Activated naive CD4-positive, alpha-beta T cell treated with anti-CD3 and anti-CD28 coated beads for 36 hours (primary cell): ENCODE measurements at regions of chr21 and their contacts with region 1.

Region 1: DNA sequence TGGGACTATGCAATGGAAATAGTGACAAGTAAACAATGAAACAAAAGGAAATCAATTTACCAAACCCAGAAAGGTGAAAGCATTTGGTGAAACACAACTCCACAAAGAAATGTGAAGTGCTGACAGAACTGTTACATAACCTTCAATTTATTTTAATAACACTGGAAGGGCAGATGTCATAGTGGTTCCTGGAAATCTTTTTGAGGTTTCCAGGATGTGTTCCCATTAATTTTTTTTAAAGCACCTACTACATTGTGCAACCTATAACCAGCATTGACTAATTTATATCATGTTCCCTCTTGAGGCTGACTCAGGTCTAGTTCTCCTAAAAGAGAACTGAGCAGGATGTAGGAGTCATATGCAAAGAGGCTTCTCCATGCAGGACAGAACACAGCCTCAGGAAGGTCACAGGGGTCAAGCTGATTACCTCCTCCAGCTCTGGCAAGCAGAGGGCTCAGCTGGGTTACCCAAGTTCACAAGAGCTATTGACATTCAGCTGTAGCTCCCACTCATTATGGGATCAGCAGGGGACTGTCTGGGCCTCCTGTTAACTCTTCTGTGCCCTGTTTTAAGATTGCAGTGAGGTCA is 157.1 kb upstream of the NRIP1 start:
- DNase-seq: peak; percentile 48
- H3K4me3 Mint-ChIP-seq: no peak overlapping the region
- H3K27ac Mint-ChIP-seq: peak overlapping the region; percentile 30
- H3K4me1 Mint-ChIP-seq: peaks cover 29% of the 10 kb centered on the region
- H3K27me3 Mint-ChIP-seq: peaks cover 4% of the 10 kb centered on the region

Region 2: DNA sequence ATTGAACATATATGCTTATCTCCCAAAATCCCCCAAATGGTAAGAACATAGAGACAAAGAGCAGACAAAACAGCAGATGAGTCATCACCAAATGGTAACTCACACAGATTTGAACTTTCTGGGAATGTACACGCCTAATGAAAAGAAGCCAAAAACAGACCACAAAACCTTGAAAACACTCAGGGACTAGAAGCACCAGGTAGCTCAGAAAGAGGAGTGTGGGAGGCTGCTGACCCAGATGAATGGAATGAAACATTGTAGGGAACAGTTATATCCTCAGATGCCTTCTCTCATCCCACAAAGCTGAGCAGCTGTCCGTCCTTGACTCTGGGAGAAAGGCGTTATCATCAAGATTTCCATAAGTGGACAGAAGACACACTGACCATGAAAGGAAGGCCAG is 200.9 kb after region 1 on chr21:
- CTCF ChIA-PET with region 1: no interaction called
- intact Hi-C with region 1: loop called (anchors 1 kb)
- DNase-seq: peak; percentile 12
- H3K4me3 Mint-ChIP-seq: no peak overlapping the region
- H3K27ac Mint-ChIP-seq: peak overlapping the region; percentile 14
- H3K4me1 Mint-ChIP-seq: peaks cover 39% of the 10 kb centered on the region
- H3K27me3 Mint-ChIP-seq: peaks cover 5% of the 10 kb centered on the region